Calu3 (cell line): ENCODE measurements at regions of chr1 and their contacts with region 1.

Region 1: DNA sequence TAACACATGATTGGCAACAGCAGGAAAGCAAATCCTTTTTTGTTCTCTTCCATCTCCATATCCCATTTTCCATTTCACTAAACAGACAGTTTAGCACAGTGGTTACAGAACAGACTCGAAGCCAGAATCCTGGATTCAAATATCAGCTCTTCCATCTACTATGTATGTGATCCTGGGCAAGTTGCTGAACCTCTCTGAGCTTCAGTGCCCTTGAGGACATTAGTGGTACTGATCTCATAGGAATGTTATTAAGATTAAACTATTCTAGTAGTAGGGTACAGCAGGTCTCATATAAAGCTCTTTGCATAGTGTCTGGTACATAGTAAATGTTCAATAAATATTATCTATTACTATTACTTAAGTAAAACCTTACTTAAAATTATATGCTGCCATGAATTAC is 13.8 kb upstream of the HHIPL2 start:
- DNase-seq: no peak
- H3K4me3 Mint-ChIP-seq: no peak overlapping the region
- H3K27ac Mint-ChIP-seq: no peak overlapping the region
- H3K4me1 Mint-ChIP-seq: no peaks in the 10 kb centered on the region
- H3K27me3 Mint-ChIP-seq: no peaks in the 10 kb centered on the region
- CTCF ChIP-seq: no peak

Region 2: DNA sequence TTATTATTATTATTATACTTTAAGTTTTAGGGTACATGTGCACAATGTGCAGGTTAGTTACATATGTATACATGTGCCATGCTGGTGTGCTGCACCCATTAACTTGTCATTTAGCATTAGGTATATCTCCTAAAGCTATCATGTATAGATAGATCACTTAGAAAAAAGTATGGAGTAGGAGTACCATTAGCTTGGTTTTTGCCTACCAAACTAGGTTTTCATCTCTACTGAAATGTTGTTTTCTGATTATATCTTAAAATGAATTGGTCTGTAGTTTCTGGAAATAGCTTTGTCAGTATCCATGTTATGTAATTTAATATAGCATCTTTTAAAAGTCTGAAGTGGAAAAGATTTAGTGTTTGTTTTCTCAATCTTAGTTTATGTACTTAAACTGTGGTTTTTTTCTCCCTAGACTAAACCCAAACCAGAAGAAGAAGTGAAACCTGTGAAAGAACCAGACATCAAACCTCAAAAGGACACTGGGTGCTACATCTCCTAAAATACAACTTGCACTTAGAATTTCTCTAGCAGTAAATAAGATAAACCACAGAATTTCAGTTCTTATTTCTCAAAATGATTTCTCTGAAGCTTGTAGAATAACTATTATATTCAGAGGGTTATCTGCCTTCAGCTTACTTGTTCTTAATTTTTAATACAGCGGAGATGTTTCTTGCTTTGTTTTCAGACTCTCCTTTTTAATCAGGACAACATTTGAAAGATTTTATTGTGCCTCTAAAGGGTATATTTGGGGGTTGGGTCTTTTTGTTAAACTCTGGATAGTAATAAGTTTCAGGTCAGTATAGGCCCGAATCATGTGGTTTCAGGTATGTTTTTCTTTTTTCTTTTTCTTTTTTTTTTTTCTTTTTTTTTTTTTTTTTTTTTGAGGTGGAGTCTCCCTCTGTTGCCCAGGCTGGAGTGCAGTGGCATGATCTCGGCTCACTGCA is 170.8 kb after region 1 on chr1:
- CTCF ChIA-PET with region 1: interaction called, 11 read pairs
- intact Hi-C with region 1: no loop called
- DNase-seq: no peak
- H3K4me3 Mint-ChIP-seq: no peak overlapping the region
- H3K27ac Mint-ChIP-seq: no peak overlapping the region
- H3K4me1 Mint-ChIP-seq: no peaks in the 10 kb centered on the region
- H3K27me3 Mint-ChIP-seq: no peaks in the 10 kb centered on the region
- CTCF ChIP-seq: no peak